T-cell (primary cell): ENCODE measurements at regions of chr17 and their contacts with region 1.

Region 1: GRCh38 chr17:37570527-37571093 is 38.6 kb downstream of the SYNRG start:
- DNase-seq: peak in 17 of 35 experiments; percentile 3 to 27 (median 11)
- ATAC-seq: peak in 2 of 4 experiments; percentile 48 to 52
- H3K4me3 ChIP-seq: no peak overlapping the region
- H3K4me3 Mint-ChIP-seq: no peak overlapping the region
- H3K27ac ChIP-seq: no peak overlapping the region
- H3K27ac Mint-ChIP-seq: no peak overlapping the region
- H3K4me1 ChIP-seq: no peaks in the 10 kb centered on the region
- H3K4me1 Mint-ChIP-seq: peaks cover 8 to 20% (median 12%) of the 10 kb centered on the region in 3 donors
- H3K27me3 ChIP-seq: no peaks in the 10 kb centered on the region
- H3K27me3 Mint-ChIP-seq: no peaks in the 10 kb centered on the region

Region 2: DNA sequence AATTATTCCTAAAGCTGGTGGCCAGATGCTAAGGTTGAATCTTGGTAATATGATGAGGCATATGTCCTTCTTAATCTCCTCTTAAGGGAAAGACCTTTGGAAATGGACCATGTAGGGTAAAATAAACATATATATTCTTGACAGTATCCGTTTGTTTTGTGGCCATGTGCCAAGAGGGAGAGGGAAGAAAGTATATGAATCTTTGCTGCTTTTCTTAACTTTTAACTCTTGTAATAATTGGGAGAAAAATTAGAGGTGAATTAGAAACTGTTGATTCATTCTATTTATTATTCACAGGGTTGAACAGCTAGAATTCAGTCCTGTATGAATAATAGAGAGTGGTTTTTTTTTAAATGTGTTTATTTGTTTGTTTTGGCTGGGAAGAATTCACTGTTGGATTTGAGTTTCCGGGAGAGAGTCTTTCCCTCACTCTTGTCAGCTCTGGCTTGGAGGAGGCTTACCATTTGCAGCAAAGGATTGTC is 590.3 kb before region 1 on chr17:
- CTCF ChIA-PET with region 1: no interaction called
- POLR2A ChIA-PET with region 1: interaction called in 1 of 2 experiments, 11 read pairs
- DNase-seq: no peak
- ATAC-seq: no peak
- H3K4me3 ChIP-seq: no peak overlapping the region
- H3K4me3 Mint-ChIP-seq: no peak overlapping the region
- H3K27ac ChIP-seq: no peak overlapping the region
- H3K27ac Mint-ChIP-seq: peak overlapping the region in 1 of 2 donors; percentile 47
- H3K4me1 ChIP-seq: no peaks in the 10 kb centered on the region
- H3K4me1 Mint-ChIP-seq: peaks cover 49 to 64% (median 53%) of the 10 kb centered on the region in 3 donors
- H3K27me3 ChIP-seq: no peaks in the 10 kb centered on the region
- H3K27me3 Mint-ChIP-seq: no peaks in the 10 kb centered on the region

Region 3: DNA sequence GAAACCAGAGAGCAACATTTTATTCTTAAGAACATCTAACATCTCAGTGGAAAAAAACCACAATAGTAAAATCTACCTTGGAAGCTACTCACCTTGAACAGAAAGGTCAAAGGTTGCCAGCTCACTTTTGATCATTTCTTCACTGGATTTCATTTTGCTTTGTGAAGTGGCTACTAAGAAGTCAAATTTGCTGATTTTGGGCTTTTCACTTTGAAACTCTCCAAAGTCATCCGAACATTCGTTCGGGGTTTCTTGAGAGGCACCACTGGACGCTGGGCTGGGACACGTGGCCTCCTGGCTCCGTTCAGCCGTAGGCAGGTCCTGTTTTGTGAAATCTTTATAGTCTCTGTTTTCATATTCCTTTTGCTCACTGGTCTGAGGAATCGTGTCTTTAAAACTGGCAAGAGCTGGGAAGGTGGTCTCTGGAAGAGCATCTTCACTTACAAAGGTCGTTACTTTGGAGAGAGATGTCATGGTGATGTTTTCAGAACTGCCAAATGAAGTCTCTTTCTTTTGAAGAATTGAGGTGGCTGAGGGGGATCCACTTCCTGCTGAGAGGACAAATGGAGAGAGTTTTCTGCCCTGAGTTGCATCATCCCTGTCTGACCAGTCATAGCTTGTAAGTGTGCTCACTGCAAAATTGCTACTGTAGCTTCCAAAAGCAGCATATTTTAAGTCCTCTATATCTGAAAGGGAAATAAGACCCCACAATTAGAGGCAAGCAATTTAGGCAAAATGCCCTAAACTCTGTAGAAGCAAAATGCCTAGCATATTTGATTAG is 28.5 kb before region 1 on chr17:
- CTCF ChIA-PET with region 1: no interaction called
- POLR2A ChIA-PET with region 1: interaction called in 1 of 2 experiments, 10 read pairs
- DNase-seq: no peak
- ATAC-seq: no peak
- H3K4me3 ChIP-seq: no peak overlapping the region
- H3K4me3 Mint-ChIP-seq: no peak overlapping the region
- H3K27ac ChIP-seq: no peak overlapping the region
- H3K27ac Mint-ChIP-seq: peak overlapping the region; percentile 16 to 43
- H3K4me1 ChIP-seq: no peaks in the 10 kb centered on the region
- H3K4me1 Mint-ChIP-seq: peaks cover 9 to 23% (median 13%) of the 10 kb centered on the region in 3 donors
- H3K27me3 ChIP-seq: no peaks in the 10 kb centered on the region
- H3K27me3 Mint-ChIP-seq: no peaks in the 10 kb centered on the region